CD4-positive, alpha-beta T cell (primary cell): ENCODE measurements at regions of chr10 and their contacts with region 1.

Region 1: GRCh38 chr10:97400665-97401454 is at the start of gene RRP12:
- DNase-seq: peak; percentile 64 to 98 (median 72)
- ATAC-seq: peak; percentile 95
- H3K4me3 ChIP-seq: peak within 1 kb of the TSS; percentile 85
- H3K4me3 Mint-ChIP-seq: peak within 1 kb of the TSS; percentile 95
- H3K27ac ChIP-seq: peak within 1 kb of the TSS; percentile 81 to 97
- H3K27ac Mint-ChIP-seq: peak within 1 kb of the TSS; percentile 89
- H3K4me1 ChIP-seq: peaks cover 17% of the 10 kb centered on the region
- H3K4me1 Mint-ChIP-seq: peaks cover 16% of the 10 kb centered on the region
- H3K27me3 ChIP-seq: no peaks in the 10 kb centered on the region
- H3K27me3 Mint-ChIP-seq: no peaks in the 10 kb centered on the region
- CTCF ChIP-seq: peak; percentile 5
- total RNA-seq, gene RRP12: 84.2 to 87.6 TPM

Region 2: GRCh38 chr10:97318772-97319651 is 81.8 kb before region 1 on chr10 and contains the start of gene FRAT1:
- CTCF ChIA-PET with region 1: interaction called, 3 read pairs
- POLR2A ChIA-PET with region 1: interaction called, 18 read pairs
- intact Hi-C with region 1: loop called in 1 of 2 experiments (anchors 5 kb)
- DNase-seq: peak; percentile 85 to 96 (median 89)
- ATAC-seq: peak; percentile 73
- H3K4me3 ChIP-seq: peak within 1 kb of the TSS; percentile 80
- H3K4me3 Mint-ChIP-seq: peak within 1 kb of the TSS; percentile 97
- H3K27ac ChIP-seq: peak within 1 kb of the TSS; percentile 99 to 100
- H3K27ac Mint-ChIP-seq: peak within 1 kb of the TSS; percentile 98
- H3K4me1 ChIP-seq: peaks cover 36% of the 10 kb centered on the region
- H3K4me1 Mint-ChIP-seq: peaks cover 38% of the 10 kb centered on the region
- H3K27me3 ChIP-seq: no peaks in the 10 kb centered on the region
- H3K27me3 Mint-ChIP-seq: no peaks in the 10 kb centered on the region
- CTCF ChIP-seq: no peak
- total RNA-seq, gene FRAT1: 45.2 to 45.5 TPM

Region 3: GRCh38 chr10:97412891-97413304 is 12.0 kb after region 1 on chr10:
- CTCF ChIA-PET with region 1: interaction called, 3 read pairs
- POLR2A ChIA-PET with region 1: interaction called, 12 read pairs
- intact Hi-C with region 1: no loop called
- DNase-seq: no peak
- ATAC-seq: no peak
- H3K4me3 ChIP-seq: no peak overlapping the region
- H3K4me3 Mint-ChIP-seq: peak overlapping the region; percentile 18
- H3K27ac ChIP-seq: no peak overlapping the region
- H3K27ac Mint-ChIP-seq: peak overlapping the region; percentile 74
- H3K4me1 ChIP-seq: peaks cover 38% of the 10 kb centered on the region
- H3K4me1 Mint-ChIP-seq: peaks cover 36% of the 10 kb centered on the region
- H3K27me3 ChIP-seq: no peaks in the 10 kb centered on the region
- H3K27me3 Mint-ChIP-seq: no peaks in the 10 kb centered on the region
- CTCF ChIP-seq: no peak

Region 4: GRCh38 chr10:97445722-97446639 is 45.1 kb after region 1 on chr10 and contains the starts of genes EXOSC1 and ZDHHC16:
- CTCF ChIA-PET with region 1: no interaction called
- POLR2A ChIA-PET with region 1: interaction called, 3 read pairs
- intact Hi-C with region 1: loop called (anchors 1 to 2 kb)
- DNase-seq: peak; percentile 73 to 95 (median 86)
- ATAC-seq: peak; percentile 97
- H3K4me3 ChIP-seq: peak within 1 kb of the TSS; percentile 78
- H3K4me3 Mint-ChIP-seq: peak within 1 kb of the TSS; percentile 100
- H3K27ac ChIP-seq: peak within 1 kb of the TSS; percentile 57 to 73
- H3K27ac Mint-ChIP-seq: peak within 1 kb of the TSS; percentile 95
- H3K4me1 ChIP-seq: peaks cover 33% of the 10 kb centered on the region
- H3K4me1 Mint-ChIP-seq: peaks cover 53% of the 10 kb centered on the region
- H3K27me3 ChIP-seq: no peaks in the 10 kb centered on the region
- H3K27me3 Mint-ChIP-seq: no peaks in the 10 kb centered on the region
- CTCF ChIP-seq: no peak
- total RNA-seq, gene EXOSC1: 28.8 to 29.7 TPM
- total RNA-seq, gene ZDHHC16: 6.2 to 6.5 TPM

Region 5: DNA sequence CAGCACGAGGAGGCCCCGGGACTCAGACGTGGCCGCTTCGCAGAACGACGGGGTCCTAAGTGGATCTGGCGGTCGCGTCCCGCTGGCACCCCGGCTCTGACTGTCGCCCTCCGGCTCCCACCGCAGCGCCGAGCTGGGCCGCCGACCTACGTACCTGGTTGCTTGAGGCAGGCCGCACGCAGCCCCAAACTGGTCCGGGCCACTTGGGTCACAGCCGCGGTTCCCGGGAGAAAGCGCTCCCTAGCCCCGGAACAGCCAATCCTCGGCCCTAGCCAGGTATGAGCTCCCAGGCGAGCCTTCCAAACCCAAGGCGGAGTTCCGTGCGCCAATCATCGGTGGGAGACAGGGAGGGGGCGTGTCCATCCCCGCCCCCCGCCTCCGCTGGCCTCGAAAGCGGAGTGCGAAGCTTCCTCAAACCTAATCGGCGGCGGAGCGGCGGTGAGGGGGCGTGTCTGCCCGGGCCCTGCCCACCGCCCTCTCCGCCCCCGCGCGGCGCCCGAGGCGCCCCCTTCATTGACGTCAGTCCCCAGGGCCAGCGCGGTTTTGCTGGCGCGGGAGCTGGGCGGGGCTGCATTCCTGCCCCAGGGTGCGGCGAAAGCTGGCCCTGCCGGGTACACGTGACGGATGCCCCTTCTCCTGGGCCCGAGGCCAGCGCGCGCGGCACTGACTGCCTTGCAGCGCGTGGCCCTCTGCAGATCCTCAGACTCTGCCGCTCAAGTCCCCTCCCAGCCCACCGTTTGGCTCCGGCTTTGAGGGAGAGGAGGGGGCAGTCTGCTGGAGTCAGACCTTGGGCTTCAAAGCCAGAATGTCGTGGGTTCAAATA is 286.3 kb after region 1 on chr10 and contains the start of gene AVPI1:
- CTCF ChIA-PET with region 1: no interaction called
- POLR2A ChIA-PET with region 1: interaction called, 8 read pairs
- intact Hi-C with region 1: loop called in 1 of 2 experiments (anchors 5 kb)
- DNase-seq: peak; percentile 90 to 98 (median 94)
- ATAC-seq: peak; percentile 91
- H3K4me3 ChIP-seq: peak within 1 kb of the TSS; percentile 82
- H3K4me3 Mint-ChIP-seq: peak within 1 kb of the TSS; percentile 90
- H3K27ac ChIP-seq: peak within 1 kb of the TSS; percentile 52 to 62
- H3K27ac Mint-ChIP-seq: peak within 1 kb of the TSS; percentile 75
- H3K4me1 ChIP-seq: peaks cover 35% of the 10 kb centered on the region
- H3K4me1 Mint-ChIP-seq: peaks cover 16% of the 10 kb centered on the region
- H3K27me3 ChIP-seq: no peaks in the 10 kb centered on the region
- H3K27me3 Mint-ChIP-seq: no peaks in the 10 kb centered on the region
- CTCF ChIP-seq: no peak
- total RNA-seq, gene AVPI1: 10.7 to 11.6 TPM